HEK293T (cell line): ENCODE measurements at regions of chr18 and their contacts with region 1.

Region 1: GRCh38 chr18:30280880-30281470 is 761.6 kb downstream of the DSC3 start:
- DNase-seq: peak; percentile 46

Region 2: GRCh38 chr18:29874519-29875098 is 406.4 kb before region 1 on chr18:
- CTCF ChIA-PET with region 1: interaction called, 35 read pairs
- POLR2A ChIA-PET with region 1: no interaction called
- DNase-seq: peak; percentile 37